ENCODE measurements at regions of chr1 and their contacts with region 1.

Region 1: DNA sequence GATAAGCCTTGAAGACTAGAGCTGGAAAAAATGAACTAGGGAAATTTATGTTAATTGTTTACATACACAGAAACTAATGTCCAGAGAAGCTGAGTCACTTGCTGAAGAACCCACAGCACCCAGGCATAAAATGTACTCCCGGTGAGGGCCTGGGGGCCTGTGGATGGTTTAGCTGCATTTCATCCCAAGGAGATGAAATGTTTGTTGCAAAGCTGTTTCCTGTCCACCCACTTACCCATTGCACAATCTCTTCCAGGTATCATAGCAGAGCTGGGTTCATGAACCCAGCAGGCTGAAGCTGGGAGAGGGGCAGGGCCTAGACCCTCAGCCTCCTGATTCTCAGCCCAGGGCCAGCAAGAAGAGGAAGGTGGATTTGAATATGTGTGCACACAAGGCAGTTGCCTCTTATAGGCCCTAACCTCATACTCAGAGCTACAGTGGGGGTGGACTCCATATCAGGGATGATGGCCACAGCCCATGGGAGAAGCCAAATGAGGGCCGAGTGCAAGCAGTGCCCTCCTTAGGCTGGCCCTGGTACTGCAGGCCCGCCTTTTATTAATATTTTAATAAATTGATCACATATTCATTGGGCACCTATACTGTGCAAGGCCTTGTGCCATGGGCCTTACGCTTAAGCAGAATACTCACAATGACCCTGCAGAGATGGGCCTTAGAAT is 110.8 kb downstream of the LACTBL1 start:
- DNase-seq: peak in 2 of 3 donors; percentile 49 to 51
- H3K4me3 ChIP-seq: no peak overlapping the region
- H3K27ac ChIP-seq: no peak overlapping the region
- H3K4me1 ChIP-seq: peaks cover 0 to 8% (median 6%) of the 10 kb centered on the region in 4 experiments
- H3K27me3 ChIP-seq: no peaks in the 10 kb centered on the region

Region 2: GRCh38 chr1:22850681-22851080 is 11.2 kb before region 1 on chr1:
- CTCF ChIA-PET with region 1: interaction called, 63 read pairs
- POLR2A ChIA-PET with region 1: no interaction called
- DNase-seq: no peak
- H3K4me3 ChIP-seq: no peak overlapping the region
- H3K27ac ChIP-seq: no peak overlapping the region
- H3K4me1 ChIP-seq: peaks cover 2 to 31% (median 28%) of the 10 kb centered on the region in 4 experiments
- H3K27me3 ChIP-seq: peaks cover 0 to 6% (median 0%) of the 10 kb centered on the region in 5 experiments

Region 3: GRCh38 chr1:22889213-22889827 is 27.4 kb after region 1 on chr1:
- CTCF ChIA-PET with region 1: interaction called, 10 read pairs
- POLR2A ChIA-PET with region 1: no interaction called
- DNase-seq: peak; percentile 31 to 62 (median 50)
- H3K4me3 ChIP-seq: no peak overlapping the region
- H3K27ac ChIP-seq: no peak overlapping the region
- H3K4me1 ChIP-seq: peaks cover 0 to 9% (median 5%) of the 10 kb centered on the region in 4 experiments
- H3K27me3 ChIP-seq: peaks cover 0 to 5% (median 0%) of the 10 kb centered on the region in 5 experiments

Measured in common myeloid progenitor, CD34-positive (primary cell).